ENCODE measurements at regions of chr11 and their contacts with region 1.

Region 1: DNA sequence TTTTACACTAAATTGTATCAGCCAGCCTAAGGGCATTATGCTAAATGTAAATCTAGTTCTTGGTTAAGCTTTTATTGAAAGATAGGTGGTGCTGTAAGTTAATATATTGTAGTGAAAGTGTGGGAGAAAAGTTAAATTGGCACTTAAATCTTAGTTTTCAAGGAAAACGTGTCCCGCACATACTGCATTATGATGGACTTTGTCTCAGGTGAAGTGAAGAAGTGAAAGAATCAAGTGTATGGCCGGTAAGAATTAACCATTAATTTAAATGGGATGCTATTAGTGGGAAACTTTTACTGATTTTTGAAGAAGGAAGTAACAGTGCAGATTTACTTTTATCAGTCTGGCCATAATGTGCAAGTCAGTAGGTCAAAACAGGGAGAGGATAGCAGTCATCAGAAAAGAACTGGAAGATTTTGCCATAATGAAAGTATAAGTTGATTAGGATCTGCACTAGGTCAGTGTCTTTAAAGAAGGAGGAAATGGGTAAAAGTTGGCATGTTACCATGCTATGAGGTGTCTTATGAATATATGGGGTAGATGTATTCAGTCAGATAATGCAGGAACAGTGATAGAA is 81.6 kb downstream of the PDHX start:
- DNase-seq: no peak
- ATAC-seq: peak in 1 of 2 donors; percentile 23

Region 2: DNA sequence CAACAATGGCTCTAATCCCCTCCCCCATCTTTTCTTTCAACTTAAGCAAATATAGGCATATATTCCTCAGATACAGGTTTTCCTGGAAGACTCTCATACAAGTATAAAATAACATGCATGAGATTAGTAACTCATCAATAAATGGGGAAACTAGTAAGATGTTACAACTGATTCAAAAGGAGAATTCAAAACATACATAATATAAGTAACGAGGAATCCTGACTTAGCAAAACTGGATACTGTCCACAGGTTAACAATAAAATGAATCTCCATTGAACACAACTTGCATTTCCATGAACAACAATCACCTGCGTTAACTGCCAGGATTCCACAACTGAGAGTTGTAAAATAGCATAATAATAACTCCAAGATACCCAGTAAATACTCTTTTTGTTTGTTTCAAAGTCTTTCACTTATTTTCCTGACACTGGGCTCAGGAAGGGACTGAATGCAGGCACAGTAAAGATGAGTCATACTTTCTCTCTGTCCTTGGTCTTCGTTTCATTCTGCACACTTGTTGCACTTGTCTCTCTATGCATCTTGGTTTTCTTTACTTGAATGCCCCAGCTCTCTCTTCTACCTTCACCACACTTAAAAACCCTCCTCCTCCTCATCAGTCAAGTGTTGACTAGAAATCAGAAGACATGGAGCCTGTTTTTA is 90.0 kb before region 1 on chr11:
- intact Hi-C with region 1: no loop called
- DNase-seq: no peak
- ATAC-seq: no peak

Region 3: DNA sequence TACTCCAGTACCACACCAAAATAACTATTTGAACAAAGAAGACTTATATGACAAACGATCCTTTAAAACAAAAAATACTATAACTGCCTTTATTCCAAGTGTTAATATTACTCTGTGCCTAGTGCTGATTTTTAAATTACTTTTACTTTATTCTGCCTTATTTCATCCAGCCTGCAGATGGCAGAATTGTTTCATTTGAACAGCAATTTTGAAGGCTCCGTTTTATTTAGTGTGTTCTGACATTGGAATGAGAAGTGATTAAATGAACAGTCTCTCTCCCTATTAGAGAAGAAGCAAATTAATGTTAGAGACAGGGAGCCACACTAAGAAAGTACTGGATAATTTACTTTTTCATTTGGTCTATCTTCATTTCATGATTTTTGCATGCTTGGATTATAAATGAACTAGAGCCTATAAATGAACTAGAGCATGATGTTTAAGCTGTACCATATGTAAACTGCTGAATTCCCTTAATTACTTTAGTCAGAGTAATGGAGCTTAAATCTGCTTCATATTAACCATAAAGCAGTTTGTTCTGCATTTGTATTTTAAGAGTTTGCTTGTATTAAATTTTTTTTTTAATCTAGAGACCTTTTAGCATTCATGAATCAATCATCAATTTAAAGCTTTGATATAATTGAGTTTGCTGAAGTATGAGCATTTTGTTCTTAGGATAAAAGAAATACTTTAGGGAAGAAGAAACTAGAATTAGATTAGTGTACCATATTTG is 71.8 kb before region 1 on chr11:
- intact Hi-C with region 1: loop called in 1 of 2 experiments (anchors 10 kb)
- DNase-seq: no peak
- ATAC-seq: peak; percentile 72

Region 4: DNA sequence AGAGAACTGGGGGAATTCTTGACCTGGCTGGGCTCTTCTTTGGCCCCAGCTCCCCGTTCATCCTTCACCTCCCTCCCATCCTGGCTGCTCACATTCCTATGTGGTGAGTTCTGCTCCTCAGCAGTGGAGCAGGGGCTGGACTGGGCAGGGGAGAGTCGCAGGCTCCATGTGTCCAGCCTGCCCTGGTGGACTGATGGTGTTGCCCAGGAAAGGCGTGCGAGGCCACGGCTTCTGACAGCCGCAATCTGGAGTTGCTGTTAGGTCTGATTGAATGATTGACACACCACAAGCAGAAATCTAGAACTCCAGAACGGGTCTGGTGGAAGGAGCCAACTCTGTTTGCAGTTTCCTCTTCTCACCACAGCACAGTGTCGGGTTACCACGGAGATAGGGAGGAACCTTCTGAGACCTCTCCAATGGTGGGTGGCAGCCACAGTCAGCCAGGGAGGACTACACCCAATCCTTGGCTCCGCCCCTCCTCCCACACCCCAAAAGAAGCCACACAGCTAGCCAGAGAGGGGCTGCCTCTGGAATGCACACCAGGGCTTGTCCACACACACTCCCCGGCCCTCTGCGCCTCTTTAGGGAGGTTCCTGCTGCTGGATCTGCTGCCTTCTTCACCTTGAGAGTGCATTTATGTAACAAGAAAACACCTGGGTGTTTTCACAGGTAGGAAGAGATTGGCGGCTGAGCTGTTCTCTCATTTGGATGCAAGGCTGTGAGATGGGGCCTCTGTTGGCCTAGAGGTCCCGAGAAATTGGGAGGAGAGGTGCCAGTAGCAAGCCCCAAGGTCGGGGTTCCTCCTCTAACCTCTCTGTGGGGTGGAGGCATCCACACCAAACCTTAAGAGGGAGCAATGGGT is 84.5 kb after region 1 on chr11:
- intact Hi-C with region 1: no loop called
- DNase-seq: peak; percentile 67
- ATAC-seq: peak; percentile 74 to 86

Region 5: DNA sequence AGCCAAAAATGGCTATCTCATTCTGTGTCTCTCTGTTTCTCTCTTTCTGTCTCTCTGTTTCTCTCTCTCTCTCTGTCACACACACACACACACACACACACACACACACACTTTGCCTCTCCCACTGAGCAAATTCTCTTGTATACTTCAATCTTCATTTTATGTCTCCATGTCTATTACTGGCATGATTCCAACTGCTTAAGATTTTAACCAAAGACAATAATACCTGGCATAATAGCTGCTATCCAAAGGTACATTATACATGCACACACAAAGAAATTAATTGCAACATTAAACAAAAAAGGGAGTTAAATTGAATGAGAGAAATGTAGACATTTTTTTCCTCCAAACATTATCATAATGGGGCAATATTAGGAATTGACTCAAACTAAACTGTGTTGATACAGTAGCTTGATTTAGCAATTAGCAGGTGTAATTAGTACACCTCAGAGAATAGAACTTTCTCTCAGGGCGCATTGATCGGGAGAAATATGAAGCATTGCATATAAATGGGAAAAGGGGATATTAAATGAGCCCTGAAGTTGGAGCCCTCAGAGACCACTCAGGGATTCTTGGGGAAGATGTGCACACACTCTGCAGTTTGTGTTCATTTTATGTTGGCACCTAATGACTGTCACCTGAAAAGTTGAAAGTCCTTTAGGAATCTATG is 438.7 kb after region 1 on chr11:
- intact Hi-C with region 1: no loop called
- DNase-seq: no peak
- ATAC-seq: no peak